Right ventricle myocardium superior (tissue), 1 donor: ENCODE measurements at regions of chr22 and their contacts with region 1.

Region 1: GRCh38 chr22:17964643-17965042 is 59.7 kb downstream of the MICAL3 start:
- DNase-seq: no peak
- ATAC-seq: no peak

Region 2: DNA sequence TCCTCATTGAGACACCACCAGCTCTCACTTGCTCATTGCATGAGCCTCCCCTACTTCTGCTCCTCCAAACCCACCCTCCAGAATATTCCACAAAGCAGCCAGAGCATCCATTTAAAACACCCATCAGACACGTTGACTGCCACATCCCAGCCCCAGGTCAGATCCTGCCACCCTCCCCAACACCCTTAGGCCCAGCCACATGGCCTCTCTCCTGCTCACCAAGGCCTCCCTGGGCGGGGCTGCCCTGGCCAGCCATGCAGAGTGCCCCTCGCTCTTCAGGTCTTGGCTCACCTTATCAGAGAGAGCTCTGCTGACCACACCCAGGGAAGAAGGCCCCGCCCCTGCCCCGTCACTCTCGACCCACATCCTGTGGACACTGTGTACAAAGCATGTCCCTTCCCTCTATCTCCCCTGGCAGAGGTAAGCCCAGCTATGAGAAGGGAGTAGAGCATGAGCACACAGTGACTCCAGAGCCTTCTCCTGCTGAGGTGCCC is 47.1 kb before region 1 on chr22:
- intact Hi-C with region 1: loop called (anchors 5 kb)
- DNase-seq: peak; percentile 68
- ATAC-seq: peak; percentile 6